ENCODE measurements at regions of chr3 and their contacts with region 1.

Region 1: DNA sequence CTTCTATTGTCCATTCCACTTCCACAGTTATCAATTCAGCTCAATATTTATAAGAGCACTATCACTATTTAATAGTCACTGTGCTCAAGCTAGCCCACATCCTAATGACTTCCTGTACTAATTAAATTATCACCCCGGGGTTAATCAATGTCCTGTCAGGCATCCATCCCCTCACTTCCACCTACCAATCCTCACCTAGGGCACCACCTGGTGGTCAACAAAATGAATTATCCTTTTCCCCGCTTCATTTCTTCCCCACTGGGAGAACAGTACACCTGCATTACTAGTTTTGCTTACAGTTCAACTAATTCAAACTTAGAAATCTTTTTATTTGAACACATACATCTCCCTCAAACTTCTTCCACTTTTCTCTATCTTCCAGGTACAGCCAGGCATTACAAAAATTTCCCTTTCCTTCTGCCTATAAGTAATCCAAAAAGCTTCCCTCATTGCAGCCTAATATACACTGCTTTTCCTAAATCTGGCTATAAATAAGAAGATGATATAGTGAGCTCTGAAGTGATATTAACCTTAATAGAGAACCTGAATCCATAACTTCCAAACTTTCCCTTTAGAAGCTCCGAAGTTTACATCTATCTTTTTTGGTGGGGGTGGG is 68.5 kb downstream of the TMCC1 start:
- DNase-seq: peak in 29 of 35 experiments; percentile 5 to 76 (median 20)
- ATAC-seq: peak in 2 of 4 experiments; percentile 36 to 42
- H3K4me3 ChIP-seq: no peak overlapping the region
- H3K4me3 Mint-ChIP-seq: no peak overlapping the region
- H3K27ac ChIP-seq: no peak overlapping the region
- H3K27ac Mint-ChIP-seq: no peak overlapping the region
- H3K4me1 ChIP-seq: peaks cover 3 to 8% of the 10 kb centered on the region in 2 experiments
- H3K4me1 Mint-ChIP-seq: peaks cover 27 to 30% (median 28%) of the 10 kb centered on the region in 3 donors
- H3K27me3 ChIP-seq: no peaks in the 10 kb centered on the region
- H3K27me3 Mint-ChIP-seq: no peaks in the 10 kb centered on the region

Region 2: DNA sequence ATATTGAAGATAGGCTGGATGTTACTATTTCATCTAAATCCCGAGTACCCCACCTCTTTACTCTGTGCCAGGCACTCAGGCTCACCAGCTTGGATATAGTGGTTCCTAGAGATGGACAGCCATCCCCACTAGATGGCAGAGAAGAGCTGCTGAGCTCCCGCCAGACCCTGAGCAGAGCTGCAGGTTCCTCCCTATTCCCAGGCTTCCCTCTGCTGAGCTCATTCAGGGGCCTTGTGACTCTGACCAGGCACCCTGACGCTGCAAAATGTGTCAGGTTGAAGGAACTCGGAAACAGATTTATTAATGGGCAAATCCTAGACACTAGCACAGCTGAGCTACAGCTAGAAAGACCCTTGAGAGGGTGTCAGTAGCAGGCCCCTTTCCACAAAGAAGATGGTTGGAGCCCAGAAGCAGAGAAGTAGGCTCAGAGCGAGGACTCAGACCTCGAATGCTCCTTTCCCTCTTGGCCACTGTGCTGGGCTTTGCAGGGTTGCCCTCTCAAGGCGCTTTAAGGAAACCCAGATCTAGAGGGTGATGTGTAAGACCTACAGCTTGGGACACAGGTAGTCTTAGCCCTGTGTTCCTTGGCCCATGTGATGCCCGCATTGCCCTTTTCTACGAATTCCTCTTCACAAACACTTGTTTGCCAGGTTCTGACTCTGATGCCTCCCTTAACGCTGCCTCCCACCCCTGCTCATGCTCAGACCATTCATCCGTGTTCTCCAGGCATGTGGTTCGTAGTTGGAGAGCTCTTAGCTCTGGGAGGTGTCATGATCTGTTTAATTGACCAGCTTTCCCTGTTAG is 334.6 kb before region 1 on chr3:
- CTCF ChIA-PET with region 1: interaction called, 3 to 14 read pairs
- POLR2A ChIA-PET with region 1: no interaction called
- DNase-seq: peak; percentile 4 to 75 (median 41)
- ATAC-seq: peak; percentile 82 to 96 (median 93)
- H3K4me3 ChIP-seq: no peak overlapping the region
- H3K4me3 Mint-ChIP-seq: no peak overlapping the region
- H3K27ac ChIP-seq: no peak overlapping the region
- H3K27ac Mint-ChIP-seq: no peak overlapping the region
- H3K4me1 ChIP-seq: peaks cover 0 to 4% of the 10 kb centered on the region in 2 experiments
- H3K4me1 Mint-ChIP-seq: peaks cover 0 to 2% (median 0%) of the 10 kb centered on the region in 3 donors
- H3K27me3 ChIP-seq: no peaks in the 10 kb centered on the region
- H3K27me3 Mint-ChIP-seq: no peaks in the 10 kb centered on the region

Region 3: GRCh38 chr3:129622226-129622874 is 202.7 kb before region 1 on chr3:
- CTCF ChIA-PET with region 1: interaction called, 10 to 12 read pairs
- POLR2A ChIA-PET with region 1: no interaction called
- DNase-seq: no peak
- ATAC-seq: no peak
- H3K4me3 ChIP-seq: no peak overlapping the region
- H3K4me3 Mint-ChIP-seq: no peak overlapping the region
- H3K27ac ChIP-seq: no peak overlapping the region
- H3K27ac Mint-ChIP-seq: no peak overlapping the region
- H3K4me1 ChIP-seq: peaks cover 7 to 27% of the 10 kb centered on the region in 2 experiments
- H3K4me1 Mint-ChIP-seq: peaks cover 12 to 22% (median 13%) of the 10 kb centered on the region in 3 donors
- H3K27me3 ChIP-seq: peaks cover 0 to 35% of the 10 kb centered on the region in 2 experiments
- H3K27me3 Mint-ChIP-seq: peaks cover 6% of the 10 kb centered on the region in 2 donors

Region 4: DNA sequence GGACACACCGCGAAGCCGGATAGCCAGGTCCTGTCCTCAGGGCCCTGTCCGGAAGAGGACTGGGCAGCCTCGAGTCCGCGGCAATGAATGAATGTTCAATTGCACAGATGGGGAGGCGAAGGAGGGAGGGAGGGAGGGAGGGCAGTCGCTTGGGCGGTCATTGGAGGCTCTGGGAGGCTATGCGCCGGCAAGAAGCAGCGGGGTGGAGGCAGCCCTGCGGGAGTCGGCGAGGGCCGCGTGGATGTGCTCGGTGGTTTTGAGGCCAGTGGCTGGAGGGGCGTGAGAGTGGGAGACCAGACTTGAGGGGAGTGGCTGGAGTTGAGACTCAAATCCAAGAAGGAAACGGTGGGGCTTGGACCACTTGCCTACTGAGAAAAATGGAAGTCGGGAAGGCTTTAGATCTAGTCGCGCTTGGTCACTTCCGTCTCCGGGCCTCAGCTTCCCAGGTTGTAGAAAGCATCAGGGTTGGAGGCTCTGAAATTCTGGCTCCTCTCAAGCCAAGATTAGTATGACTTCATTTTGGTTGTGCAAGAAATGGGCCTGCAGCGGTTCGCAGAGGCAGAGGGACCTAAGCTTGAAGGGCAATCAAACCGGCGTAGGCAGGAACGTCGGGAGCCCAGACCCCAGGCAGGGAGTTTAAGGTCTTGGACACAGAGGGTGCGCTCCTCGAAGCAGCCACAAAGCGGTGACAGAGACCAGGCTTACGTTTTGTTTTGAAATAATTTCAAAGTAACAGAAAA is 197.4 kb before region 1 on chr3:
- CTCF ChIA-PET with region 1: interaction called, 10 to 12 read pairs
- POLR2A ChIA-PET with region 1: no interaction called
- DNase-seq: peak; percentile 42 to 79 (median 61)
- ATAC-seq: peak; percentile 62 to 84 (median 76)
- H3K4me3 ChIP-seq: peak overlapping the region; percentile 53 to 65
- H3K4me3 Mint-ChIP-seq: peak overlapping the region; percentile 82 to 86 (median 85)
- H3K27ac ChIP-seq: peak overlapping the region; percentile 49
- H3K27ac Mint-ChIP-seq: peak overlapping the region; percentile 78 to 87
- H3K4me1 ChIP-seq: peaks cover 4 to 24% of the 10 kb centered on the region in 2 experiments
- H3K4me1 Mint-ChIP-seq: peaks cover 13 to 22% (median 16%) of the 10 kb centered on the region in 3 donors
- H3K27me3 ChIP-seq: peaks cover 0 to 13% of the 10 kb centered on the region in 2 experiments
- H3K27me3 Mint-ChIP-seq: no peaks in the 10 kb centered on the region

Region 5: DNA sequence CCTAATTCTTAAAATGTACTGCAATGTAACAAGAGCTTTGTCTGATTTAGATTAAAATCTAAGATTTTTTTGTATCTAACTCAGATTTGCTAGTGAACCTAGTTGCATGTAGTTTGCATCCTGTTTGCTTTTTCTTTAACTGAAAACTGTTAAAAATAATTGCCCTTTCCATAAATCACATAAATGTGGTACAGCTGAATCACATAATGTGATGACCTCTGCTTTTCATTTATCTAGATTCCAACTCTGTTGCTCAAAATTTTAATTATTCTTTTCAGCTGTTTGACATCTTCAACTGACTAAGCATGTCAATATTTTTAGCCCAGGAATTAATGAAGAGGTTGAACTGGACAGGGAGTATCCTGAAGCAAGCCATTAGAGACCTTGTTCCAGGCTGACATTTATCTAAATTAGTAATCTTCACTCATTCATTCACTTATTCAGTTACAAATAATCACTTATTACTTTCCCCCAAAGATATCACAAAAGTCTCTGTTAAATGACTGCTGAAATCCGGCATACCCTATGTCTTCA is 116.6 kb before region 1 on chr3:
- CTCF ChIA-PET with region 1: no interaction called
- POLR2A ChIA-PET with region 1: no interaction called
- DNase-seq: no peak
- ATAC-seq: no peak
- H3K4me3 ChIP-seq: no peak overlapping the region
- H3K4me3 Mint-ChIP-seq: no peak overlapping the region
- H3K27ac ChIP-seq: no peak overlapping the region
- H3K27ac Mint-ChIP-seq: no peak overlapping the region
- H3K4me1 ChIP-seq: no peaks in the 10 kb centered on the region
- H3K4me1 Mint-ChIP-seq: peaks cover 0 to 8% (median 4%) of the 10 kb centered on the region in 3 donors
- H3K27me3 ChIP-seq: no peaks in the 10 kb centered on the region
- H3K27me3 Mint-ChIP-seq: no peaks in the 10 kb centered on the region

Region 6: GRCh38 chr3:129809297-129809696 is 15.7 kb before region 1 on chr3:
- CTCF ChIA-PET with region 1: interaction called in 1 of 2 experiments, 10 read pairs
- POLR2A ChIA-PET with region 1: no interaction called
- DNase-seq: no peak
- ATAC-seq: no peak
- H3K4me3 ChIP-seq: no peak overlapping the region
- H3K4me3 Mint-ChIP-seq: no peak overlapping the region
- H3K27ac ChIP-seq: no peak overlapping the region
- H3K27ac Mint-ChIP-seq: no peak overlapping the region
- H3K4me1 ChIP-seq: no peaks in the 10 kb centered on the region
- H3K4me1 Mint-ChIP-seq: peaks cover 21 to 36% (median 33%) of the 10 kb centered on the region in 3 donors
- H3K27me3 ChIP-seq: no peaks in the 10 kb centered on the region
- H3K27me3 Mint-ChIP-seq: no peaks in the 10 kb centered on the region